ENCODE measurements at regions of chr6 and their contacts with region 1.

Region 1: DNA sequence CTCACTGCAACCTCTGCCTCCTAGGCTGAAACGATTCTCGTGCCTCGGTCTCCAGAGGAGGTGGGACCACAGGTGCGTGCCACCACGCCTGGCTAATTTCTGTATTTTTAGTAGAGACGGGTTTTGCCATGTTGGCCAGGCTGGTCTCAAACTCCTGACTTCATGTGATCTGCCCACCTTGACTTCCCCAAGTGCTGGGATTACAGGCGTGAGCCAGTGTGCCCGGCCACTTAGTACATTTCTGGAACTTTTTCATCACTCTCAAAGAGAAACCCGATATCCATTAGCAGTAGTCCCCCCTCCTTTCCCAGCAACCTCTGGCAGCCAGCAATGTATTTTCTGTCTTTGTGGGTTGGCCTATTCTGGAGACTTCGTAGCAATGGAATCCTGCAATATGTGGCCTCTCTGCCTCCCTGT is 109.8 kb downstream of the JARID2 start:
- DNase-seq: no peak
- H3K4me3 Mint-ChIP-seq: no peak overlapping the region
- H3K27ac Mint-ChIP-seq: no peak overlapping the region
- H3K4me1 Mint-ChIP-seq: peaks cover 63% of the 10 kb centered on the region
- H3K27me3 Mint-ChIP-seq: no peaks in the 10 kb centered on the region

Region 2: GRCh38 chr6:15340775-15341174 is 14.9 kb before region 1 on chr6:
- intact Hi-C with region 1: loop called (anchors 2 kb)
- DNase-seq: no peak
- H3K4me3 Mint-ChIP-seq: peak overlapping the region; percentile 24
- H3K27ac Mint-ChIP-seq: peak overlapping the region; percentile 69
- H3K4me1 Mint-ChIP-seq: peaks cover 83% of the 10 kb centered on the region
- H3K27me3 Mint-ChIP-seq: no peaks in the 10 kb centered on the region

Measured in activated T-helper 1 cell treated with anti-CD3 and anti-CD28 coated beads, Interleukin-12 subunit alpha, Interleukin-12 subunit beta, Interleukin-2, Interleukin-4 antibody, amounts not matched to agents 30 ng/mL and 10 ng/mL and 1 ng/mL, durations not matched to agents 14 hours and 24 hours and 36 hours (primary cell).